A549 (cell line): ENCODE measurements at regions of chr9 and their contacts with region 1.

Region 1: DNA sequence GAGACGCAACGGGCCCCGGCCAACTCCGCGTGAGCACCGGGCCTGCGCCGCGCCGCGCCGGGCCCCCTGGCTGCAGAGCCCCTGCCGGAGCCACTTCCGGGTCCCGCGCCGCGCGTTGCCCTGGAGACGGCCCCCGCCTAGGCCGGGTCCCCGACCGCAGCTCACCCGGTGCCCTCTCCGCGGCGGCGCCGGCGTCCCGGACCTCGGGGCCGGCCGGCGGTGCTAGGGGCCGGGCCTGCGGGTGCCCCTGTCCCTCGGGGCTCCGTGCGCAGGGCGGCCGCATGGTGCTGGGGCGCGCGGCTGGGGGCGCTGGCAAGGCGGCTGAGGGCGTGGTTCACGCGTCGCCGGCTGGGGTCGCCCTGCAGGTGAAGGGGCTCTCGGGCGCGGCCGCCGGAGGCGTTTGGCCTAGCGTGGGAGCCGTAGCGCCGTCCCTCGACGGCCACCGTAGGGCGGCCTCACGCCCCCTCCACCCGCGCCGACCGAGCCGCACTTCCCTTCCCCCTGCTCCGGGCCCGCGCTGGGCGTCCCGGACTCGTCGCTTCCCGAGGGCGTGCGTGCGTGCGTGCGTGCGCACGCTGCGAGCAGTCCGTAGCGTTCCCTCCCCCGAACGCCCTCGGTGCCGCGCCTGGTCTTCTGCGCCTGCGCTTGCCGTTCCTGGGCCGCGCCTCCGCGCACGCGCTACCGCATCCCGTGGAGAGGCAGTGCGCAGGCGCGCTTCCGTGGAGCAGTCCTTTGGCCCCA is at the start of gene TMEM250:
- DNase-seq: peak; percentile 87 to 98
- ATAC-seq: peak; percentile 76 to 87
- H3K4me3 ChIP-seq: peak within 1 kb of the TSS; percentile 93
- H3K27ac ChIP-seq: peak within 1 kb of the TSS; percentile 96 to 100
- H3K4me1 ChIP-seq: peaks cover 18% of the 10 kb centered on the region
- CTCF ChIP-seq: no peak
- EP300 ChIP-seq: no peak; a peak in 1 of 5 replicates
- POLR2A ChIP-seq: peak; percentile 84
- RAD21 ChIP-seq: no peak
- polyA plus RNA-seq, gene TMEM250: 13.0 and 15.3 TPM in 2 replicates

Region 2: GRCh38 chr9:135961277-135961705 is 157.2 kb before region 1 on chr9 and contains the start of gene UBAC1:
- CTCF ChIA-PET with region 1: interaction called, 220 read pairs
- POLR2A ChIA-PET with region 1: no interaction called
- DNase-seq: peak; percentile 95 to 99
- ATAC-seq: peak; percentile 92 to 93
- H3K4me3 ChIP-seq: peak within 1 kb of the TSS; percentile 87
- H3K27ac ChIP-seq: peak within 1 kb of the TSS; percentile 86 to 93
- H3K4me1 ChIP-seq: peaks cover 12% of the 10 kb centered on the region; the same call in 2 of the 3 replicates
- CTCF ChIP-seq: peak; percentile 29
- EP300 ChIP-seq: no peak
- POLR2A ChIP-seq: peak; percentile 30; the same call in 1 of the 2 replicates
- RAD21 ChIP-seq: no peak
- polyA plus RNA-seq, gene UBAC1: 31.5 and 37.6 TPM in 2 replicates

Region 3: DNA sequence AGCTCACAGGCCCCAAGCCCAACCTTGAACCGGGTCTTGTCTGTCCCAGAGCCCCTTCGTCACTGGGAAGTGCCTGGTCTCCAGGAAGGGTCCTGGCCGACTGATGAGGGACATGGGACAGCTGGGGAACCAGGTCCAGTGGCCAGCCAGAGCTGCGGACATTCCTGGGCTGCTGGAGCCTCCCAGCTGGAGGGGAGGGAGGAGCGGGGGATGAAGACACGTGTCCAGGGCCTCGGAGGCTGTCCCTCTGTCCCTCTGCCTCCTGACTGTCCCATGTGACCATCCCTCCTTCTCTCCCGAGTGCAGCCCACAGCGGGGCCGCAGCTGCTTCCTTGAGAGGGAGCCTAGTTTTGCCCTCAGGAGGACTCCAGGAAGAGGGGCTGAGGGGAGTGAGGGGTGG is 115.6 kb before region 1 on chr9:
- CTCF ChIA-PET with region 1: interaction called, 16 read pairs
- POLR2A ChIA-PET with region 1: no interaction called
- DNase-seq: no peak
- ATAC-seq: no peak
- H3K4me3 ChIP-seq: no peak overlapping the region
- H3K27ac ChIP-seq: peak overlapping the region in 1 of 2 experiments; percentile 63; a peak in 1 of 6 replicates
- H3K4me1 ChIP-seq: peaks cover 28% of the 10 kb centered on the region
- CTCF ChIP-seq: no peak
- EP300 ChIP-seq: no peak
- POLR2A ChIP-seq: no peak
- RAD21 ChIP-seq: no peak

Region 4: GRCh38 chr9:136045971-136046920 is 72.2 kb before region 1 on chr9:
- CTCF ChIA-PET with region 1: interaction called, 24 read pairs
- POLR2A ChIA-PET with region 1: interaction called, 9 read pairs
- DNase-seq: no peak
- ATAC-seq: no peak
- H3K4me3 ChIP-seq: no peak overlapping the region
- H3K27ac ChIP-seq: no peak overlapping the region
- H3K4me1 ChIP-seq: peaks cover 37% of the 10 kb centered on the region
- CTCF ChIP-seq: no peak
- EP300 ChIP-seq: no peak
- POLR2A ChIP-seq: no peak
- RAD21 ChIP-seq: no peak

Region 5: GRCh38 chr9:136085815-136086212 is 32.7 kb before region 1 on chr9:
- CTCF ChIA-PET with region 1: interaction called, 94 read pairs
- POLR2A ChIA-PET with region 1: interaction called, 9 read pairs
- DNase-seq: no peak
- ATAC-seq: 0 out of 6 replicates have a peak, but pooled peaks of 1 of the 2 experiments have one; percentile 8
- H3K4me3 ChIP-seq: no peak overlapping the region
- H3K27ac ChIP-seq: peak overlapping the region in 1 of 2 experiments; percentile 16; a peak in 1 of 6 replicates
- H3K4me1 ChIP-seq: peaks cover 19% of the 10 kb centered on the region
- CTCF ChIP-seq: no peak
- EP300 ChIP-seq: no peak
- POLR2A ChIP-seq: no peak
- RAD21 ChIP-seq: no peak

Region 6: DNA sequence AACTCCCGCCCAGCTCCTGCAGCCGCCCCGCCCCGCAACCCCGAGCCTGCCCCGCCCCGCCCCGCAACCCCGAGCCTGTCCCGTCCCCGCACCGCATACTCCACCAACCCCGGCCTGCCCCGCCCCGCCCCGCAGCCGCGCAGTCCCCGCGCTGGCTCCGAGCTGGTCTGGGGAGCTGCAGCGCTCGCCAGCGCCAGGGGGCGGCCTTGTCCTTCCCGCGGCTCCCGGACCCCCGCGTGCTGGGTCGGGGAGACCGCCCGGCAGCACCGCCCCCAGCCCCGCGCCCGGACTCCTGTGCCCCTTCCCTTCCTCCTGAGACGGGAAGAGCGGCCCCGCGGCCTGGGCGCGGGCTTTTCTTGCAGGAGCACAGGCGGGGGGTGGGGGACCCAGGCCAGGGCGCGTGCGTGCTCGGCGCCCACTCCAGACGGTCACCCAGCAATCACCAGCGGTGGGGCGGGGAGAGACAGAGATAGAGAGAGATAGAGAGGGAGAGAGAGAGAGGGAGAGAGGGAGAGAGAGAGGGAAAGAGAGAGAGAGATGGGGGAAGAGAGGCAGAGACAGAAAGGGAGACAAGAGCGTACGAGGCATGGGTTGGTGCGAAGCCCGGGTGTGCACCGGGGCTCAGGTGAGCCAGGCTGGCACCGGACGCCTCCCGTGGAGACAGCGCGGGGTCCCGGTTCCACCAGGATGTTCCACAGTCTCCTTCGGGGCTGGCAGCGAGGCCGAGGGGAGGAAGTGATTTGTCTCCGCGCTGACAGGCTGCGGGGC is 14.9 kb after region 1 on chr9:
- CTCF ChIA-PET with region 1: interaction called, 22 read pairs
- POLR2A ChIA-PET with region 1: no interaction called
- DNase-seq: peak in 1 of 2 experiments; percentile 73
- ATAC-seq: peak; percentile 41 to 80; a peak in 5 of 6 replicates
- H3K4me3 ChIP-seq: peak overlapping the region; percentile 58
- H3K27ac ChIP-seq: peak overlapping the region; percentile 68 to 91
- H3K4me1 ChIP-seq: peaks cover 8% of the 10 kb centered on the region; the same call in 2 of the 3 replicates
- CTCF ChIP-seq: peak; percentile 53
- EP300 ChIP-seq: no peak
- POLR2A ChIP-seq: no peak
- RAD21 ChIP-seq: peak; percentile 27 to 63; a peak in 4 of 5 replicates

Region 7: GRCh38 chr9:136239981-136240330 is 121.5 kb after region 1 on chr9:
- CTCF ChIA-PET with region 1: no interaction called
- POLR2A ChIA-PET with region 1: no interaction called
- DNase-seq: no peak
- ATAC-seq: no peak
- H3K4me3 ChIP-seq: no peak overlapping the region
- H3K27ac ChIP-seq: no peak overlapping the region
- H3K4me1 ChIP-seq: peaks cover 15% of the 10 kb centered on the region
- CTCF ChIP-seq: no peak
- EP300 ChIP-seq: no peak
- POLR2A ChIP-seq: no peak
- RAD21 ChIP-seq: no peak